Adrenal gland (tissue), 19 donors: ENCODE measurements at regions of chr7 and their contacts with region 1.

Region 1: DNA sequence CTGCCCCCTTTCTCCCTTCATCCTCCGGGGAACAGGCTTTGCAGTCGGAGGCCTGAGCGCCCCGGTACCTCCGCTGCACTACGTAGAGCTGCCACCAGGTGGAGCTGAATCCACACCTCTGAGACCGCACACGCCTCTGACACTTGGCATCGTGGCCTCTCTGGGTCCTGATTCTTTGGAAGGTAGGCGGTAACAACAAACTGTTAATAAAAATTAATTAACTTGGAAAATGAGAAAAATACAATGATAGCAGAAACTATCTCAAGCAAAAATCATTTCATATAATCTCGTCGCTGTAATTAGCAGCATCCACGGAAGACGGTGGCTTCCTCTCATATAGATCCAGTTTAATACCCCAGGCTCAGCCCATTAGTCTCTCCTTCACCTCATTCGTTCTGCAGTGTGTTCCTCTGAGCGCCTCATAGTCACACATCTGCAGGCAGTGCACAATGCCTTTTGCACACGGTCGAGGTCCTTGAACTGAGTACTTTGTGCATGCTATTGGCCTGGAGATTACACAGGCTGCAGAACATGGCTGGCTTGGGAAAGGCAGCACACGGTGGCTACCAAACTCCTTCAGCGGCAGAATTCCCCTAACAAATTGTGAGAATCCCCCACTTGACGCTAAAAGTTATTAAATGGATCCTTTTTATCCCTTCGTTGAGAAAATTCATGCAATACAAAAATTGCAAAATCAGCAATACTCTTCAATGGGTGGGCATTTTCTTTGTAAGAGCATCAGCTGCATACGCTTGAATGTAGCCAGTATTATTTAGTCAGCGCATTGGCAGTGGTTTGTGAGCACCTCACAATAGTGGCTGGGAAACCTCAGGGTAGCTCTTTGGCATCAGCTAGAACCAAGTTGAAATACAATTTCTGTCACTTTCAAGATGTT is 18.7 kb downstream of the OR9A2 start:
- DNase-seq: peak; percentile 63 to 91 (median 78)
- H3K4me3 ChIP-seq: no peak overlapping the region
- H3K27ac ChIP-seq: no peak overlapping the region
- H3K4me1 ChIP-seq: no peaks in the 10 kb centered on the region
- H3K27me3 ChIP-seq: no peaks in the 10 kb centered on the region
- CTCF ChIP-seq: peak; percentile 88 to 97 (median 94)
- POLR2A ChIP-seq: no peak

Region 2: GRCh38 chr7:142854372-142855113 is 153.7 kb before region 1 on chr7 and contains the start of gene EPHB6:
- intact Hi-C with region 1: loop called in 1 of 2 experiments (anchors 5 kb)
- DNase-seq: peak; percentile 63 to 78 (median 66)
- H3K4me3 ChIP-seq: peak within 1 kb of the TSS; percentile 38 to 66 (median 53)
- H3K27ac ChIP-seq: peak within 1 kb of the TSS in 3 of 5 donors; percentile 46 to 76 (median 63)
- H3K4me1 ChIP-seq: peaks cover 0 to 12% of the 10 kb centered on the region in 2 donors
- H3K27me3 ChIP-seq: no peaks in the 10 kb centered on the region
- CTCF ChIP-seq: no peak
- POLR2A ChIP-seq: peak in 1 of 2 donors; percentile 19
- total RNA-seq, gene EPHB6: 0.78 to 14.4 (median 3.6) TPM

Region 3: DNA sequence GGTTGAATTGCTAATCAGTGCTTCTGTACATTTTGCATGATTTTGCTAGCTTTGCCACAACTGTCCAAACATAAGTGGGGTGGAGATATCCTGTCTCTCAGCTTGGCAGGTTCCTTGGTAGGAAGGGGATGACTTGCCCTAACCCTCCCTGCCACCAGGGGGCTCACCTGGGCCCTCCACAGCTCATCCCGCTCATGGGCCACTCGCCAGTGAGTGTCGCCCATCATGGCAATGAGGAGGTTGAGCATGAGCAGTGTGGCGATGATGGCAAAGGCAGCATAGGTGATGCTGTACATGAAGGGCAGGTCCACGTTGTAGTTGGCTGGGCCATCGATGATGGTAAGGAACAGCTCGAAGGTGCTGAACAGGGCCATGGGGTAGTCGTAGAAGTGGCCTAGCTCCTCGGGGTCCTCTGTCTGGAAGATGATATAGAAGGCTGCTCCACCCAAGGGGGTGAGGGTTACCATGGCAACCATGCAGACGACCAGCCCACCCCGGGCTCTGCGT is 134.9 kb before region 1 on chr7:
- intact Hi-C with region 1: loop called in 1 of 2 experiments (anchors 10 kb)
- DNase-seq: no peak
- H3K4me3 ChIP-seq: no peak overlapping the region
- H3K27ac ChIP-seq: no peak overlapping the region
- H3K4me1 ChIP-seq: no peaks in the 10 kb centered on the region
- H3K27me3 ChIP-seq: no peaks in the 10 kb centered on the region
- CTCF ChIP-seq: peak in 2 of 6 experiments; percentile 23 to 39
- POLR2A ChIP-seq: no peak

Region 4: DNA sequence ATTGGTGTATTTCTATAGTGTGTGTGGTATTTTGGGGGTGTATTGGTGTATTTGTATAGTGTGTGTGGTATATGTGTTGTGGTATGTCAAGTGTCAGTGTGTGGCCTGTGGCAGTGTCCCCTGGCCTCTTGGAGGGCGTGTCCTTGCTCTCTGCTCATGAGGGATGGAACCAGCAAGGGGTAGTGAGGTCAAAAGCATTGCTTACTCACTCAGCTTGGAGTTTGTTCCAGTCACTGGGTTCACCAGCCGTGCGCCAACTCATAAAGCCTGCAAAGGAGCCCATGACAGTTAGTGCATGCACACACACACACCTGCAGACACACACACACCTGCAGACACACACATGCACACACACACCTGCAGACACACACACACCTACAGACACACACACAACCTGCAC is 118.4 kb before region 1 on chr7:
- intact Hi-C with region 1: no loop called
- DNase-seq: peak in 2 of 7 donors; percentile 9 to 14
- H3K4me3 ChIP-seq: no peak overlapping the region
- H3K27ac ChIP-seq: no peak overlapping the region
- H3K4me1 ChIP-seq: no peaks in the 10 kb centered on the region
- H3K27me3 ChIP-seq: no peaks in the 10 kb centered on the region
- CTCF ChIP-seq: no peak
- POLR2A ChIP-seq: no peak

Region 5: GRCh38 chr7:143214789-143215679 is 206.8 kb after region 1 on chr7:
- intact Hi-C with region 1: loop called (anchors 2 to 5 kb)
- DNase-seq: peak; percentile 49 to 82 (median 68)
- H3K4me3 ChIP-seq: no peak overlapping the region
- H3K27ac ChIP-seq: no peak overlapping the region
- H3K4me1 ChIP-seq: no peaks in the 10 kb centered on the region
- H3K27me3 ChIP-seq: no peaks in the 10 kb centered on the region
- CTCF ChIP-seq: peak; percentile 98 to 100 (median 100)
- POLR2A ChIP-seq: no peak